Right ventricle myocardium inferior (tissue), 1 donor: ENCODE measurements at regions of chr17 and their contacts with region 1.

Region 1: GRCh38 chr17:81821603-81822311 is 11.3 kb downstream of the MCRIP1 start:
- DNase-seq: peak; percentile 87
- ATAC-seq: peak; percentile 86

Region 2: GRCh38 chr17:81612172-81612970 is 209.4 kb before region 1 on chr17:
- intact Hi-C with region 1: no loop called
- DNase-seq: peak; percentile 63
- ATAC-seq: peak; percentile 27

Region 3: DNA sequence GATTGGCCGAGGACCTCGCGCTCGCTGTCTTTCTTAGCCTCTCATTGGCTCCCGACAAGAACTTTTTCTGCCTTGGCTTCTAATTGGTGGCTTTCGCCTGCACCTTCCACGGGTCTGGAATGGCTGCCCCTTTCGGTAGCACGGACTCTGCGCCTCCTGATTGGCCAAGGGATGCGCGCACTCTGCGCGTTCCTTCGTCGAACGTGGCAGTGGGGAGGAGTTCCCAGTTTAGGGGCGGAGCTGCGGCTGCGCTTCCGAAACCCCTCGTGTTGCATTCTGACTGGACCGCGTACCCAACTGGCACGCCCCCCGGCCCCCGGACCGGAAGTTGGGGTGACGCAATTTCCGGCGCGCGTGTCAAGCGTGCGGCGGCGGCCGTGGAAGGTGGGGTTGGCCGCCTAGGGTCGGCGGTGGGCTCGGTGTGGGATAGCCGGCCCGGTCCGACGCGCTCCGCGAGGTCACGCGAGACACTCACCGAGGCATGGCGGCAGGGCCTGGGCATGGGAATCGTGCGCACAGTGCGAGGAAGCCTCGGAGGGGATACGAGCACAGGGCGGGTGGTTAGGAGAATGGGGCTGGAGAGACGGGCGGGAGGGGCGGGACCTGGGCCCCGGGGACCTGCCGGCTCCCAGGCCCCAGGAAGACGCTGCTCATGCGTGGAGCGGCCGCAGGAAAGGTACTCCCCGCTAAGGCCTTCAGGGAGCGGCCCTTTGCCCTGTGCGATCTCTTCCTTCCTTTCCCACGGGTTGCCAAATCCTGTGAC is 39.2 kb after region 1 on chr17:
- intact Hi-C with region 1: loop called (anchors 1 kb)
- DNase-seq: peak; percentile 99
- ATAC-seq: peak; percentile 97

Region 4: DNA sequence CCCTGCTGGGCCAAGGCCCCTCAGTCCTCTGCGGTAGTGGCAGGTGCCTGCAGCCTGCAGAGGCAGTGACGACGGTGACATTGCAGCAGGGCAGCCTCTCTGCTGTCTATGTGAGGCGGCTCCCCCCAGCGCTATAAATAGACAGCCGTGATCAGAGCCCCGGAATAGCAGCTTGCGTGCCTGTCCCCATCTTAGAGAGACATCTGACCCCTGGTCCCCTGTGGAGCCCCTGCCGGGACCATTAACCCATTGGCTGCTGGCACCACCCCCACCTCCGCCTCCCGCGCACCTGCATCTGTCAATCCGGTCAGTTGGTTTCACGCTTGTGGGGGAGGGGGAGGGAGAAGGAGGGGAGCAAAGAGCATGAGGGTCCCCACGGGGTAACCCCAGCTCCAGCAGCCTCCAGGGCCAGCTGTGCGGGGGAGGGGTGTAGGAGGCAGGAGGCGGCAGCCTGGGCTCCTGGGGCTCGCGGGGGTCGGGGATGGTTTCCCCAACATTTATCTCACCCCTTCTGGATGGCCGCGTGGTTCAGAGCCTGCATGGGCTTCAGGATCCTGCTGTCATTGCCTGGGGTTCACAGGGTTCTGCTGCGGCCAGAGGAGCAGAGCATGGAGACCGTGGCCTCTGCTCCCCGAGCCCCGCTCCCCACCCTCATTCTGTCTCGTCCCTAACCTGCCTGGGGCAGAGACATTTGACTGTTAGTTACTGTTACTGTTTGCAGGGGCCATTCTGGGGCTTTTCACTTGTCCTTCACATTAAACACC is 120.2 kb after region 1 on chr17:
- intact Hi-C with region 1: loop called (anchors 5 kb)
- DNase-seq: peak; percentile 73
- ATAC-seq: peak; percentile 26